AG04449 (cell line): ENCODE measurements at regions of chr1 and their contacts with region 1.

Region 1: GRCh38 chr1:201254625-201255506 is 28.4 kb upstream of the PKP1 start:
- DNase-seq: no peak
- H3K4me3 ChIP-seq: no peak overlapping the region
- CTCF ChIP-seq: peak; percentile 99

Region 2: GRCh38 chr1:200992382-200993048 is 262.4 kb before region 1 on chr1:
- CTCF ChIA-PET with region 1: no interaction called
- POLR2A ChIA-PET with region 1: no interaction called
- DNase-seq: no peak
- H3K4me3 ChIP-seq: no peak overlapping the region
- CTCF ChIP-seq: no peak

Region 3: GRCh38 chr1:201268604-201269151 is 13.8 kb after region 1 on chr1:
- CTCF ChIA-PET with region 1: interaction called, 82 read pairs
- POLR2A ChIA-PET with region 1: no interaction called
- DNase-seq: peak; percentile 38
- H3K4me3 ChIP-seq: no peak overlapping the region
- CTCF ChIP-seq: no peak

Region 4: DNA sequence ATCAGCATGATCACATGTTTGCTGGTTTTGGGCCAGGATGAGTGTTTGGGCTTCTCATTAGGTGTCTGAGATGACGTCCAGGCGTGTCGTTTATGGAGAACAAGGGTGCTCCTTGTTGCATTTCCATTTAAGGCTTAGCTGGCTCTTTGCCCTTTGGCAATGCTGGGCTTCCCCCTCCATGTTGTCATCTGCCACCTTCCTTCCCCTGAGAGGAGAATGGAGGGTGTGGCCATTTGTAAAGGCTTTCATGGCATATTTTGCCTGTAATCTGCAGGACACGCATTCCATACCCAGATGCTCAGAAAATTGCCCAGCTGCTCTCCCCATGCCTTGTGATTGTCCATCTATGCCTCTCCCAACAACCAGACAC is 56.1 kb after region 1 on chr1:
- CTCF ChIA-PET with region 1: interaction called, 12 read pairs
- POLR2A ChIA-PET with region 1: no interaction called
- DNase-seq: no peak
- H3K4me3 ChIP-seq: no peak overlapping the region
- CTCF ChIP-seq: no peak

Region 5: GRCh38 chr1:201353150-201353801 is 98.4 kb after region 1 on chr1:
- CTCF ChIA-PET with region 1: interaction called, 349 read pairs
- POLR2A ChIA-PET with region 1: no interaction called
- DNase-seq: no peak
- H3K4me3 ChIP-seq: no peak overlapping the region
- CTCF ChIP-seq: no peak

Region 6: GRCh38 chr1:201370500-201370899 is 115.6 kb after region 1 on chr1:
- CTCF ChIA-PET with region 1: interaction called, 349 read pairs
- POLR2A ChIA-PET with region 1: no interaction called
- DNase-seq: no peak
- H3K4me3 ChIP-seq: no peak overlapping the region
- CTCF ChIP-seq: no peak

Region 7: DNA sequence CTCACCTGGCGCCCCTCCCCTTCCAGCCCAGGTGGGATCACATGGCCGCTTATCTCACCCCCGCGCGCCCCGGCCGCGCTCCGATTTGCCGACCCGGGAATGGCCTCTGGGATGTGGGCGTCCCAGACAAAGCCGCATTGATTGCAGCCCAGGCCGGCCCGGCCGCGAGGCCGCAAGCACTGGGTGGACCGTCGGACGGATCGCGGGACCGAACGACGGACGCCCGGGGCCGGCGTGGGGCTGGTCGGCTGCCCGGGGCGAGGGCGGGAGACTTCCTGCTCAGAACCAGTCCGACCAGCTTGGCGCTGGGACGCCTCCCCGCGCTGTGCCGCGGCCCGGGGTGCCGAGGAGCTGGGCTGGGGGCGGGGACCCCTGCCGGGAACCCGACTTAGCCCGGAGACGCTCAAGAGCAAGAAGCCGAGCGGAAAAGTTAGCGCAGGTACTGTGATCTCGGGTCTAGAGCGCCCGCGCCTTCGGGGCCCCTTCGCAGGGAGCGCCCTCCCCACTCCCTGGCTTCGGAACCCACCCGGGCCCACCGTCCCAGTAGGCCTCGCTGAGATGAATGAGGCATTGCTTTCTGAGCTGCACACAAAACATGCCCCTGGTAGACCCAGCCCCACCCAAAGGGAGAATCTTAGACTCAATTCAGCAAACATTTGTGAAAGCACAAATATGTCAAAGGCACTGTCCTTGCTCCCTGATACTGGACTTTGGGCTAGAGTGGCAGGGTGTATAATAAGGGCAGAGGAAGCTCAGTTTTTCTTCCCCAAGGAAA is 144.7 kb after region 1 on chr1:
- CTCF ChIA-PET with region 1: interaction called, 13 read pairs
- POLR2A ChIA-PET with region 1: no interaction called
- DNase-seq: no peak
- H3K4me3 ChIP-seq: no peak overlapping the region
- CTCF ChIP-seq: no peak

Region 8: GRCh38 chr1:201426479-201427310 is 171.8 kb after region 1 on chr1:
- CTCF ChIA-PET with region 1: no interaction called
- POLR2A ChIA-PET with region 1: no interaction called
- DNase-seq: no peak
- H3K4me3 ChIP-seq: no peak overlapping the region
- CTCF ChIP-seq: no peak

Region 9: DNA sequence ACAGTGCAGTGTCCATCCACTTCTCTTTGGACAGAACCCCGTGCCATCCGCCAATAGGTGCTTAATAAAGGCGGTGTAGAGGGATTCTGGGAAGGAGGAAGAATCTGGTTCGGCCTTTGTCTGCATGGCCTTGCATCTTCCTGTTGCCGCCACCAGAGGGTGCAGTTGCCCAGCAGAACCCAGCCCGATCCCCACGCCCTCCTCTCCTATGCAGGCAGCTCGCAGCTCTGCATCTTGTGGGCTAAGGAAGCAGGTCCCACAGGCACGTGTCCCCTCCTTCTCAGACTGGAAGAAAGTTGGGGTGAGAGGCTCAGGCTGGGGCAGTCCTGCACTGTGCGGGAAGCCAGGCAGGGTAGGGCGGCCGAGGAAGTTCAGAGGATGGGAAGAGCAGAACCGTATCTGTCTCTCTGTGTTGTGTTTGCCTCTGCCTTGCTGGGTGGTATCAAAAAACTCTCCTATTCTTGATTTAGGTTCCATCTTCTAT is 304.9 kb after region 1 on chr1:
- CTCF ChIA-PET with region 1: no interaction called
- POLR2A ChIA-PET with region 1: no interaction called
- DNase-seq: no peak
- H3K4me3 ChIP-seq: no peak overlapping the region
- CTCF ChIP-seq: peak; percentile 96